CD4-positive, alpha-beta memory T cell (primary cell): ENCODE measurements at regions of chr17 and their contacts with region 1.

Region 1: DNA sequence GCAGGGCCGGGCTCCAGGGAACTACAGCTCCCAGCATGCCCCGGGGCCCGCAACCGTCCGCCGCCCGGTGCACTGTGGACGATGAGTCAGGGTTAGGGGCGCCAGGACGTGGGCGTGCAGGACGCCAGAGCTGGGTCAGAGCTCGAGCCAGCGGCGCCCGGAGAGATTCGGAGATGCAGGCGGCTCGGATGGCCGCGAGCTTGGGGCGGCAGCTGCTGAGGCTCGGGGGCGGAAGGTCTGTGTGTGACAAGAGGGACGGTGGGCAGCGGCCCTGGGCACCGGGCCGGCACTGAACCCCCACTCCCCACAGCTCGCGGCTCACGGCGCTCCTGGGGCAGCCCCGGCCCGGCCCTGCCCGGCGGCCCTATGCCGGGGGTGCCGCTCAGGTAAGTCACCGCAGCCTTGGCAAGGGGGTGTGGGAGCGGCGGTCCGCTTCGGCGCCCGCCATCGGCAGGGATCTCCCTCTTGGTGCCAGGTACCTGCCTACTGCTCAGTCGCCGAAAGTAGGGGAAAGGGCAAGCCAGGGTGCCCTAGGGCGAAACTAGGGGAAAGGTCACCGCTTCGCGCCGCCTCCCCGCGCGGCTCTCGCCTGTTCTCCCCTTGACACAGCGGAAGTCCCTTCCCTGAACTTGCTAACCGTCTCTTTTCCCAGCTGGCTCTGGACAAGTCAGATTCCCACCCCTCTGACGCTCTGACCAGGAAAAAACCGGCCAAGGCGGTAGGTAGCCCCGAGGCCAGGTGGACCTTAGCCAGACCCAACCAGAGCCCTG is at the starts of genes ACADVL and DLG4:
- DNase-seq: peak; percentile 54 to 77 (median 56)
- H3K4me3 ChIP-seq: peak within 1 kb of the TSS; percentile 54 to 89
- H3K4me3 Mint-ChIP-seq: peak within 1 kb of the TSS; percentile 87 to 98 (median 92)
- H3K27ac ChIP-seq: peak within 1 kb of the TSS; percentile 80
- H3K27ac Mint-ChIP-seq: peak within 1 kb of the TSS; percentile 94 to 99 (median 98)
- H3K4me1 ChIP-seq: peaks cover 54% of the 10 kb centered on the region
- H3K4me1 Mint-ChIP-seq: peaks cover 27 to 62% (median 41%) of the 10 kb centered on the region in 4 donors
- H3K27me3 ChIP-seq: no peaks in the 10 kb centered on the region
- H3K27me3 Mint-ChIP-seq: no peaks in the 10 kb centered on the region
- total RNA-seq, gene ACADVL: 340 to 342 TPM
- total RNA-seq, gene DLG4: 7.2 to 7.6 TPM

Region 2: GRCh38 chr17:7035591-7036368 is 184.2 kb before region 1 on chr17 and contains the start of gene SLC16A13:
- CTCF ChIA-PET with region 1: no interaction called
- POLR2A ChIA-PET with region 1: interaction called, 10 read pairs
- intact Hi-C with region 1: no loop called
- DNase-seq: peak; percentile 97 to 100 (median 98)
- H3K4me3 ChIP-seq: peak within 1 kb of the TSS; percentile 32 to 81
- H3K4me3 Mint-ChIP-seq: peak within 1 kb of the TSS; percentile 90 to 96 (median 94)
- H3K27ac ChIP-seq: peak within 1 kb of the TSS; percentile 87
- H3K27ac Mint-ChIP-seq: peak within 1 kb of the TSS; percentile 97 to 99 (median 98)
- H3K4me1 ChIP-seq: peaks cover 65% of the 10 kb centered on the region
- H3K4me1 Mint-ChIP-seq: peaks cover 25 to 81% (median 49%) of the 10 kb centered on the region in 4 donors
- H3K27me3 ChIP-seq: no peaks in the 10 kb centered on the region
- H3K27me3 Mint-ChIP-seq: no peaks in the 10 kb centered on the region
- total RNA-seq, gene SLC16A13: 13.1 to 13.7 TPM

Region 3: GRCh38 chr17:7204828-7205461 is 15.1 kb before region 1 on chr17:
- CTCF ChIA-PET with region 1: no interaction called
- POLR2A ChIA-PET with region 1: interaction called, 13 read pairs
- intact Hi-C with region 1: no loop called
- DNase-seq: peak; percentile 97 to 99 (median 97)
- H3K4me3 ChIP-seq: peak overlapping the region; percentile 19 to 71
- H3K4me3 Mint-ChIP-seq: peak overlapping the region; percentile 78 to 92 (median 89)
- H3K27ac ChIP-seq: peak overlapping the region; percentile 92
- H3K27ac Mint-ChIP-seq: peak overlapping the region; percentile 92 to 100 (median 100)
- H3K4me1 ChIP-seq: peaks cover 21% of the 10 kb centered on the region
- H3K4me1 Mint-ChIP-seq: peaks cover 15 to 38% (median 28%) of the 10 kb centered on the region in 4 donors
- H3K27me3 ChIP-seq: no peaks in the 10 kb centered on the region
- H3K27me3 Mint-ChIP-seq: no peaks in the 10 kb centered on the region

Region 4: GRCh38 chr17:7234083-7234951 is 14.3 kb after region 1 on chr17 and contains the start of gene DVL2:
- CTCF ChIA-PET with region 1: interaction called, 48 read pairs
- POLR2A ChIA-PET with region 1: interaction called, 435 read pairs
- intact Hi-C with region 1: loop called (anchors 1 kb)
- DNase-seq: peak; percentile 93 to 97 (median 94)
- H3K4me3 ChIP-seq: peak within 1 kb of the TSS; percentile 48 to 98
- H3K4me3 Mint-ChIP-seq: peak within 1 kb of the TSS; percentile 89 to 97 (median 93)
- H3K27ac ChIP-seq: peak within 1 kb of the TSS; percentile 87
- H3K27ac Mint-ChIP-seq: peak within 1 kb of the TSS; percentile 94 to 98 (median 96)
- H3K4me1 ChIP-seq: peaks cover 54% of the 10 kb centered on the region
- H3K4me1 Mint-ChIP-seq: peaks cover 34 to 60% (median 48%) of the 10 kb centered on the region in 4 donors
- H3K27me3 ChIP-seq: no peaks in the 10 kb centered on the region
- H3K27me3 Mint-ChIP-seq: no peaks in the 10 kb centered on the region
- total RNA-seq, gene DVL2: 75.1 to 76.8 TPM

Region 5: GRCh38 chr17:7280519-7281429 is 60.8 kb after region 1 on chr17:
- CTCF ChIA-PET with region 1: interaction called, 3 read pairs
- POLR2A ChIA-PET with region 1: interaction called, 5 read pairs
- intact Hi-C with region 1: loop called (anchors 2 kb)
- DNase-seq: peak; percentile 82 to 86 (median 85)
- H3K4me3 ChIP-seq: peak overlapping the region; percentile 23 to 58
- H3K4me3 Mint-ChIP-seq: peak overlapping the region; percentile 77 to 90 (median 82)
- H3K27ac ChIP-seq: peak overlapping the region; percentile 41
- H3K27ac Mint-ChIP-seq: peak overlapping the region; percentile 36 to 84 (median 66)
- H3K4me1 ChIP-seq: peaks cover 25% of the 10 kb centered on the region
- H3K4me1 Mint-ChIP-seq: peaks cover 4 to 28% (median 18%) of the 10 kb centered on the region in 4 donors
- H3K27me3 ChIP-seq: peaks cover 10% of the 10 kb centered on the region
- H3K27me3 Mint-ChIP-seq: peaks cover 15 to 19% of the 10 kb centered on the region in 2 donors

Region 6: GRCh38 chr17:7296189-7296902 is 76.3 kb after region 1 on chr17:
- CTCF ChIA-PET with region 1: interaction called, 79 read pairs
- POLR2A ChIA-PET with region 1: interaction called, 30 read pairs
- intact Hi-C with region 1: loop called (anchors 1 kb)
- DNase-seq: peak; percentile 41 to 62 (median 51)
- H3K4me3 ChIP-seq: no peak overlapping the region
- H3K4me3 Mint-ChIP-seq: peak overlapping the region in 6 of 8 donors; percentile 8 to 86 (median 50)
- H3K27ac ChIP-seq: no peak overlapping the region
- H3K27ac Mint-ChIP-seq: peak overlapping the region in 3 of 7 donors; percentile 55 to 60 (median 59)
- H3K4me1 ChIP-seq: peaks cover 26% of the 10 kb centered on the region
- H3K4me1 Mint-ChIP-seq: peaks cover 7 to 31% (median 18%) of the 10 kb centered on the region in 4 donors
- H3K27me3 ChIP-seq: no peaks in the 10 kb centered on the region
- H3K27me3 Mint-ChIP-seq: peaks cover 2 to 19% of the 10 kb centered on the region in 2 donors